WTC11 (cell line): ENCODE measurements at regions of chr2 and their contacts with region 1.

Region 1: GRCh38 chr2:11778923-11779757 is 32.7 kb downstream of the LPIN1 start:
- DNase-seq: peak; percentile 89
- ATAC-seq: peak; percentile 97
- H3K4me3 Mint-ChIP-seq: no peak overlapping the region
- H3K27ac Mint-ChIP-seq: no peak overlapping the region
- H3K4me1 Mint-ChIP-seq: peaks cover 24% of the 10 kb centered on the region
- H3K27me3 Mint-ChIP-seq: no peaks in the 10 kb centered on the region
- CTCF ChIP-seq: peak; percentile 98

Region 2: GRCh38 chr2:11681722-11682589 is 97.2 kb before region 1 on chr2:
- CTCF ChIA-PET with region 1: interaction called, 33 read pairs
- POLR2A ChIA-PET with region 1: no interaction called
- DNase-seq: peak; percentile 84
- ATAC-seq: peak; percentile 65
- H3K4me3 Mint-ChIP-seq: no peak overlapping the region
- H3K27ac Mint-ChIP-seq: no peak overlapping the region; the same call in 1 of the 2 replicates
- H3K4me1 Mint-ChIP-seq: peaks cover 53% of the 10 kb centered on the region
- H3K27me3 Mint-ChIP-seq: no peaks in the 10 kb centered on the region
- CTCF ChIP-seq: peak; percentile 100

Region 3: GRCh38 chr2:11688222-11689069 is 90.7 kb before region 1 on chr2:
- CTCF ChIA-PET with region 1: interaction called, 33 read pairs
- POLR2A ChIA-PET with region 1: no interaction called
- DNase-seq: peak; percentile 87
- ATAC-seq: peak; percentile 79
- H3K4me3 Mint-ChIP-seq: peak overlapping the region; percentile 50
- H3K27ac Mint-ChIP-seq: no peak overlapping the region
- H3K4me1 Mint-ChIP-seq: peaks cover 18% of the 10 kb centered on the region
- H3K27me3 Mint-ChIP-seq: no peaks in the 10 kb centered on the region
- CTCF ChIP-seq: peak; percentile 76

Region 4: DNA sequence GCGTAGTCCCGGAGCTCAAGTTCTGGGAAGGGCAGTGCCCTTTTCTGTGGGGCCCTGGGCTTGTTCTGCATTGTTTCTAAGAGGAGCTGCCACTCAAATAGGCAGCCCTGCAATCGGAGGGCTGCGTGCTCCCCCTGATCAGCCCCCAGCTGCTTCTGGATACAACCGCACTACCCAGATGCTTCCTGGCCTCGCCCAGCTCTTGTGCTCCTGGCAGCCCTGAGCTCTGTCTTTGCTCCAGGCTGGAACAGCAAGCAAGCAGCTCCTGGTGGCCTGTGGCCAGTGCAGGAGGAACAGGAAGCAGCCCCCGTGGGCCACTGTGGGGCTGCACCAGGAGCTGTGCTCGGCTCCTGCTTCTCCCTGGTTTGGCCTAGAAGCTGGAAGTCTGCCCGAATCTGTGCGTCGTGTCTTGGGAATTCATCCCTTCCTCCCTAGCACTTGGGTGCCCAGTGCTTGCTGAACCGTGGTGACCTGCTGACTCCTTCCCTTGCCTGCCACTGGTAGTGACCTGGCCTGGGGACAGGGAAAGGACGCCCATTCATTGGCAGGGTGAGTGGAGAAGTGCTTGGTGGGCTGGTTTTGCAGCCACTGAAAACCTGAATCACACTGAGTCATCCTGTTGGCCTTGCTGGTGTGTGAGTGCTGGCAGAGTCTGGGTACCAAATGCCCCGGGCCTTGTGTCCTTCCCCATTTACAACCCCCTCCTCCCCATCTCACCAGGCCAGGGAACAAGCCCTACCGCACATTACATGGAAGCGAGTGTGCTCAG is 81.9 kb before region 1 on chr2:
- CTCF ChIA-PET with region 1: interaction called, 19 read pairs
- POLR2A ChIA-PET with region 1: no interaction called
- DNase-seq: no peak
- ATAC-seq: peak; percentile 13; the same call in 1 of the 2 replicates
- H3K4me3 Mint-ChIP-seq: no peak overlapping the region
- H3K27ac Mint-ChIP-seq: no peak overlapping the region
- H3K4me1 Mint-ChIP-seq: no peaks in the 10 kb centered on the region
- H3K27me3 Mint-ChIP-seq: no peaks in the 10 kb centered on the region
- CTCF ChIP-seq: no peak

Region 5: GRCh38 chr2:11738589-11739436 is 40.3 kb before region 1 on chr2:
- CTCF ChIA-PET with region 1: interaction called, 64 read pairs
- POLR2A ChIA-PET with region 1: no interaction called
- DNase-seq: peak; percentile 57
- ATAC-seq: peak; percentile 95
- H3K4me3 Mint-ChIP-seq: no peak overlapping the region
- H3K27ac Mint-ChIP-seq: 0 out of 2 replicates have a peak overlapping the region, but pooled peaks have one; percentile 67
- H3K4me1 Mint-ChIP-seq: peaks cover 27% of the 10 kb centered on the region
- H3K27me3 Mint-ChIP-seq: peaks cover 3% of the 10 kb centered on the region
- CTCF ChIP-seq: no peak

Region 6: GRCh38 chr2:11743846-11744553 is 35.1 kb before region 1 on chr2:
- CTCF ChIA-PET with region 1: interaction called, 64 read pairs
- POLR2A ChIA-PET with region 1: no interaction called
- DNase-seq: peak; percentile 77
- ATAC-seq: peak; percentile 62
- H3K4me3 Mint-ChIP-seq: no peak overlapping the region
- H3K27ac Mint-ChIP-seq: peak overlapping the region; percentile 90
- H3K4me1 Mint-ChIP-seq: peaks cover 55% of the 10 kb centered on the region
- H3K27me3 Mint-ChIP-seq: peaks cover 13% of the 10 kb centered on the region
- CTCF ChIP-seq: no peak

Region 7: GRCh38 chr2:11753886-11754699 is 25.0 kb before region 1 on chr2:
- CTCF ChIA-PET with region 1: interaction called, 15 read pairs
- POLR2A ChIA-PET with region 1: no interaction called
- DNase-seq: no peak
- ATAC-seq: peak; percentile 21; the same call in 1 of the 2 replicates
- H3K4me3 Mint-ChIP-seq: no peak overlapping the region
- H3K27ac Mint-ChIP-seq: no peak overlapping the region; the same call in 1 of the 2 replicates
- H3K4me1 Mint-ChIP-seq: peaks cover 46% of the 10 kb centered on the region
- H3K27me3 Mint-ChIP-seq: no peaks in the 10 kb centered on the region
- CTCF ChIP-seq: no peak